T-cell (primary cell): ENCODE measurements at regions of chr21 and their contacts with region 1.

Region 1: DNA sequence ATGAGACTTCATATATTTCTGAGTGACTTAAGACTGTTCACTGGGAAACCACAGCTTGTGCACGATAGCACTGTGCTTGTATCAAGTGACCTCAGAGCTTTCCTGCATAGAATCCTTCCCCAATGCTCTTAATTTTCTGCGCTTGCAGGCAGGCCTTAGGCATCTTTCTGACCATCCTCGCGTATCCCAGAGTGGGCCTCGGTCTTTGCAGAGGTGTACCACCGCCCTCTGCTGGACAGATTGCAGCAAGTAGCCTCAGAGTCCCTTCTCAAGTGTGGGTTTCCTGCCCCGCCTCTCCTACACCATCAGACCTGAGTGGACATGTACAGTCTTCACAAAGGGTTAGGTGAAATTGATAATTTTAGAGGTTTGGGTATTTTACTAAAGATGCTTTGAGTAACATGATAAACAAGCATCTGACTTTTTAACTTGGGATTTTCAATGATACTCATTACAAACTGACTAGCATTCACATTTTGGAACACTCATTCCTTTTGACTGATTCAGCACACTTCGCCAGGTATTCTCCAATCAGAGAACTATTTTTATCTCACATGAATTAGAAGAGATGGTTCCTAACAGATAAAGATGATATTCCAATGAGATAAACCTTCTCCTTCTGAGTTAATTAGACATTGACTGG is 246.5 kb upstream of the USP25 start:
- DNase-seq: peak; percentile 30 to 85 (median 66)
- ATAC-seq: peak; percentile 92 to 98 (median 96)
- H3K4me3 ChIP-seq: no peak overlapping the region
- H3K4me3 Mint-ChIP-seq: no peak overlapping the region
- H3K27ac ChIP-seq: no peak overlapping the region
- H3K27ac Mint-ChIP-seq: no peak overlapping the region
- H3K4me1 ChIP-seq: peaks cover 4 to 9% of the 10 kb centered on the region in 2 experiments
- H3K4me1 Mint-ChIP-seq: peaks cover 25 to 32% (median 28%) of the 10 kb centered on the region in 3 donors
- H3K27me3 ChIP-seq: no peaks in the 10 kb centered on the region
- H3K27me3 Mint-ChIP-seq: no peaks in the 10 kb centered on the region

Region 2: DNA sequence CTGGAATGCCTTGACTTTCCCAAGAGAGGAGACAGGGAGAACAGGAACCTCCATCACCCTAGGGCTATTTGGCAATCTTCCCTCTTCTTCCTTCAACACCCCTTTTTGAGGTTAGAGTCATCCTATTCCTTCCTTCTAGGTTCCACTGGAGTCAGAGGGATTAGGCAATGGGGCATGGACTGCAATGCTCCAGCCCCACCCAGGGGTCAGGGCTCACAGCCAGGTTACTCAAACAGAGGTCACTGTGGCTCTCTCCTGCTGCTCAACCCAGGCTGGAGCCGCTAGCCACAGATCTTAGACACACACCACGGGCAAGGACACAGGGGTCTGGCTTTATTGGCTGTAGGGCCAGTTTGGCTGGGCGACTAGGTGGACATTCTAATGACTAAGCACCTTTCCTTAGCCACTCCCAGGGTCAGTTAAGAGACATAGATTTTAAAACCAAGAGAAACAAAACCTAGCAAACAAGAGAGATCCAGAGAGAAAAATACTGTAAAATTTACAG is 273.0 kb before region 1 on chr21:
- CTCF ChIA-PET with region 1: no interaction called
- POLR2A ChIA-PET with region 1: no interaction called
- DNase-seq: peak in 1 of 35 experiments; percentile 3
- ATAC-seq: no peak
- H3K4me3 ChIP-seq: no peak overlapping the region
- H3K4me3 Mint-ChIP-seq: no peak overlapping the region
- H3K27ac ChIP-seq: peak overlapping the region; percentile 48
- H3K27ac Mint-ChIP-seq: peak overlapping the region; percentile 49 to 68
- H3K4me1 ChIP-seq: no peaks in the 10 kb centered on the region
- H3K4me1 Mint-ChIP-seq: peaks cover 0 to 4% (median 0%) of the 10 kb centered on the region in 3 donors
- H3K27me3 ChIP-seq: peaks cover 0 to 4% of the 10 kb centered on the region in 2 experiments
- H3K27me3 Mint-ChIP-seq: peaks cover 4% of the 10 kb centered on the region in 2 donors

Region 3: DNA sequence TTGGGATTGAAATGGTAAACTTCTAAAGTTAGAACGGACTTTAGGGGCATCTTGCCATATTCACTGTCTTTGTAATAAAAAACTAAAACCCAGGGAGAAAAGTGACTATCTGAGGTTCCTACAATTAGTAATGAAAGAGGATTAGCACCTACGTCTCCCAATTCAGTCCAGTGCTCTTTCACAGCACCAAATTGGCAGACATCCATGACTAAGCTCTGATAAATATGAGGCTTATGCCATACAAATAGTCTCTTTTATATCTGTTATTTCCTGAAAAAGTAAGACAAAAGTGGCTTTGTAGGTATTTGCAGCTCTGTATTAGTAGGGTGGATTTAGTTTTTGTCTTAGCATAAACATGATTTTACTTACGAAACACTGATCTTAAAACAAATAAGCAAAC is 103.5 kb before region 1 on chr21:
- CTCF ChIA-PET with region 1: no interaction called
- POLR2A ChIA-PET with region 1: no interaction called
- DNase-seq: no peak
- ATAC-seq: no peak
- H3K4me3 ChIP-seq: no peak overlapping the region
- H3K4me3 Mint-ChIP-seq: no peak overlapping the region
- H3K27ac ChIP-seq: no peak overlapping the region
- H3K27ac Mint-ChIP-seq: no peak overlapping the region
- H3K4me1 ChIP-seq: no peaks in the 10 kb centered on the region
- H3K4me1 Mint-ChIP-seq: no peaks in the 10 kb centered on the region
- H3K27me3 ChIP-seq: no peaks in the 10 kb centered on the region
- H3K27me3 Mint-ChIP-seq: no peaks in the 10 kb centered on the region

Region 4: DNA sequence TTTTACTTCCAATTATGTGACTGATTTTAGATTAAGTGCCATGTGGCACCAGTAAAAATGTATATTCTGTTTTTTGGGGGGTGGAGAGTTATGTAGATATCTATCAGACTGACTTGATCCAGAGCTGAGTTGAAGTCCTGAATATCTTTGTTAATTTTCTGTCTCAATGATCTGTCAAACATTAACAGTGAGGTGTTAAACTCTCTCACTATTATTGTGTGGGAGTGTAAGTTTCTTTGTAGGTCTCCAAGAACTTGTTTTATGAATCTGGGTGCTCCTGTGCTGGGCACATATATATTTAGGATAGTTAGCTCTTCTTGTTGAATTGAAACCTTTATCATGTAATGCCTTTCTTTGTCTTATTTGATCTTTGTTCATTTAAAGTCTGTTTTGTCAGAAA is 30.0 kb before region 1 on chr21:
- CTCF ChIA-PET with region 1: no interaction called
- POLR2A ChIA-PET with region 1: no interaction called
- DNase-seq: no peak
- ATAC-seq: no peak
- H3K4me3 ChIP-seq: no peak overlapping the region
- H3K4me3 Mint-ChIP-seq: no peak overlapping the region
- H3K27ac ChIP-seq: no peak overlapping the region
- H3K27ac Mint-ChIP-seq: no peak overlapping the region
- H3K4me1 ChIP-seq: no peaks in the 10 kb centered on the region
- H3K4me1 Mint-ChIP-seq: no peaks in the 10 kb centered on the region
- H3K27me3 ChIP-seq: no peaks in the 10 kb centered on the region
- H3K27me3 Mint-ChIP-seq: no peaks in the 10 kb centered on the region

Region 5: GRCh38 chr21:15552914-15553494 is 69.7 kb after region 1 on chr21:
- CTCF ChIA-PET with region 1: interaction called, 7 to 10 read pairs
- POLR2A ChIA-PET with region 1: no interaction called
- DNase-seq: peak in 1 of 35 experiments; percentile 31
- ATAC-seq: peak; percentile 40 to 67 (median 44)
- H3K4me3 ChIP-seq: no peak overlapping the region
- H3K4me3 Mint-ChIP-seq: no peak overlapping the region
- H3K27ac ChIP-seq: no peak overlapping the region
- H3K27ac Mint-ChIP-seq: no peak overlapping the region
- H3K4me1 ChIP-seq: peaks cover 6 to 12% of the 10 kb centered on the region in 2 experiments
- H3K4me1 Mint-ChIP-seq: peaks cover 14 to 19% (median 15%) of the 10 kb centered on the region in 3 donors
- H3K27me3 ChIP-seq: peaks cover 0 to 2% of the 10 kb centered on the region in 2 experiments
- H3K27me3 Mint-ChIP-seq: no peaks in the 10 kb centered on the region